ENCODE measurements at regions of chr6 and their contacts with region 1.

Region 1: GRCh38 chr6:96907498-96907897 is 9.8 kb upstream of the NDUFAF4 start:
- DNase-seq: no peak
- H3K4me3 ChIP-seq: no peak overlapping the region
- H3K27ac ChIP-seq: no peak overlapping the region
- H3K4me1 ChIP-seq: no peaks in the 10 kb centered on the region
- H3K27me3 ChIP-seq: peaks cover 0 to 8% (median 5%) of the 10 kb centered on the region in 5 experiments

Region 2: GRCh38 chr6:96683819-96684528 is 223.5 kb before region 1 on chr6:
- CTCF ChIA-PET with region 1: no interaction called
- POLR2A ChIA-PET with region 1: no interaction called
- DNase-seq: no peak
- H3K4me3 ChIP-seq: no peak overlapping the region
- H3K27ac ChIP-seq: no peak overlapping the region
- H3K4me1 ChIP-seq: no peaks in the 10 kb centered on the region
- H3K27me3 ChIP-seq: no peaks in the 10 kb centered on the region

Region 3: GRCh38 chr6:96716221-96716620 is 191.3 kb before region 1 on chr6:
- CTCF ChIA-PET with region 1: no interaction called
- POLR2A ChIA-PET with region 1: no interaction called
- DNase-seq: no peak
- H3K4me3 ChIP-seq: no peak overlapping the region
- H3K27ac ChIP-seq: no peak overlapping the region
- H3K4me1 ChIP-seq: no peaks in the 10 kb centered on the region
- H3K27me3 ChIP-seq: no peaks in the 10 kb centered on the region

Region 4: DNA sequence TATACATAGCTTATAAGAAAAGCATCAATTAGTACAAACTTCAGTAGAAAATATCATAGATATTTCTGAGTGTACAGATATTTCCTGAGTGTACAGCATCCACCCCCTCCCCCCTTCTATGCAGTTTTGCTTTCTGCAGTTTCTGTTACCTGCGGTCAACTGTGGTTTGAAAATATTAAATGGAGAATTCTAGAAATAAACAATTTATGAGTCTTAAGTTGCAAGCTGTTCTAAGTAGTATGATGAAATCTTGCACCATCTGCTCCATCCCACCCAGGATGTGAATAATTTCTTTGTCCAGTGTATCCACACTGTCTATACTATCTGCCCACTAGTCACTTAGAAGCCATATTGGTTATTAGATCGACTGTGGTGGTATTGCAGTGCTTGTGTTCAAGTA is 54.4 kb before region 1 on chr6:
- CTCF ChIA-PET with region 1: no interaction called
- POLR2A ChIA-PET with region 1: no interaction called
- DNase-seq: no peak
- H3K4me3 ChIP-seq: no peak overlapping the region
- H3K27ac ChIP-seq: no peak overlapping the region
- H3K4me1 ChIP-seq: no peaks in the 10 kb centered on the region
- H3K27me3 ChIP-seq: no peaks in the 10 kb centered on the region

Region 5: DNA sequence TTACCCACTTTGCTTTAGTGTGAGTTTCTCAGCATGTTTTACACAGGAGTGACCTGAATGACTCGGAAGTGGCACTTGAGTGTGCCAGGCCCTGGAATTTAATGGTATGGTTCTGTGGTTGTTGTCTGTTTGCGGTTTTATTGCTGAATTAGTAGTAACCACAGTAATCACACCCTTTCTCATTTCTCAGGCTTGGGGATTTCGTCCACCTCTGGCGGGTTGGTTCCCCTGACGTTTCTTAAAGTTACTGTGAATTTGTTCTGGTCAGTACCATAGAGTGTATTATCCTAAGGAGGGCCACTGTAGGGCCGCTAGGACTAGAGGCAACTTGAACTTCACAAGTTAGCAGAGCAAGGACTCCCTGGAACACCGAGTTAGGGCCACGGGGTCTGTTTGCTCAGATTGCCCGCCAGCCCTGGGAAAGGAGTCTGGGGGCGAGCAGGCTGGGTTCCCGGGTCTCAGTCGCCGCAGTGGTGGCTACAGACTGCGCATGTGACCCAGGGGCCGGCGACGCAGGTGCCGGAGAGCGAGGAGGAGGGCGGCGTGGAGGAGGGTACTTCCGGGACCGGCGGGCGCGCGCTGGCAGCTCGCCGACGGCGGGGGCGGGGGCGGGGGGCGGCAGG is 16.5 kb after region 1 on chr6:
- CTCF ChIA-PET with region 1: interaction called, 10 read pairs
- POLR2A ChIA-PET with region 1: no interaction called
- DNase-seq: peak in 2 of 3 donors; percentile 48 to 67
- H3K4me3 ChIP-seq: peak overlapping the region; percentile 38 to 86 (median 71)
- H3K27ac ChIP-seq: peak overlapping the region in 1 of 2 experiments; percentile 50
- H3K4me1 ChIP-seq: peaks cover 8 to 18% (median 15%) of the 10 kb centered on the region in 4 experiments
- H3K27me3 ChIP-seq: peaks cover 0 to 7% (median 0%) of the 10 kb centered on the region in 5 experiments

Measured in common myeloid progenitor, CD34-positive (primary cell).